Endothelial cell of umbilical vein (primary cell): ENCODE measurements at regions of chr16 and their contacts with region 1.

Region 1: GRCh38 chr16:15502041-15502725 is 67.8 kb downstream of the BMERB1 start:
- DNase-seq: peak; percentile 93
- H3K4me3 ChIP-seq: peak overlapping the region in 1 of 3 experiments; percentile 40
- H3K27ac ChIP-seq: peak overlapping the region; percentile 68
- H3K4me1 ChIP-seq: peaks cover 15% of the 10 kb centered on the region
- H3K27me3 ChIP-seq: no peaks in the 10 kb centered on the region
- CTCF ChIP-seq: no peak
- POLR2A ChIP-seq: no peak

Region 2: DNA sequence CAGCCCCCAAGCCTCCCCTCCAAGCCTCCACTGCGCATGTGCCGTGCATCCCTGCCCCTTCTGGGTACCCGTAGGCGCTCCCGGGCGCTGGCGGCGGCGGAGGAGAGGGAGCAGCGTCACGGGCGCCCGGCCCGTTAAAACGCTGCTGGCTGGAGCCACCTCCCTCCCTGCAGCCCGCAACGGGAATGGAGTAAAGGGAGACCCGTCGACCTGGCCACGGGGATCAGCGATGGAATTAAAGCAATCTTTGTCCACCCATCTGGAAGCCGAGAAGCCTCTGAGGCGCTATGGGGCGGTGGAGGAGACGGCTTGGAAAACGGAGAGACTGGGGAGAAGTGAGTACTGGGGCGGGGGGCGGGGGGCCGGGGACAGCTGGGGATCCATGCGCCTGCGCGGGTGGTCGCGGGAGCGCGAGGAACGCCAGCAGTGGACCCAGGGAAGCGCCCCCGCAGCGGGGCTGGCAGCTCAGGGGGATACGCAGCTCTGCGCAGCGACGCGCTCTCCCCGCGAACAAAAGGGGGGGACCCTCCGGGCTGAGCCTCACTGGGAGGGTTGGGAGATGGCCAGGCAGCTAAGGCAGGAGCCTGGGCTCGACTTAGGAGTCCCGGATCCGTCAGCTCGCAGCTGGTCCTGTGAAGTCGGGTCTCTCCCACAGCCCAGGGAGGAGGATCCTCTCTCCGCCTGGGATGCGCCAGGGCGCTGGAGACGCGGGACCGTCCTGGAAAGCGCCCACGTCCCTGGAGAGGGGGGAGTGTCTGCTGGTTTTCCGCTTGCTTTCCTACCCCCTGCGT is 67.6 kb before region 1 on chr16 and contains the start of gene BMERB1:
- CTCF ChIA-PET with region 1: no interaction called
- POLR2A ChIA-PET with region 1: no interaction called
- dilution Hi-C with region 1: no loop called
- intact Hi-C with region 1: loop called (anchors 2 kb)
- DNase-seq: peak; percentile 73
- H3K4me3 ChIP-seq: peak within 1 kb of the TSS; percentile 67 to 96 (median 72)
- H3K27ac ChIP-seq: no peak within 1 kb of the TSS
- H3K4me1 ChIP-seq: peaks cover 9% of the 10 kb centered on the region
- H3K27me3 ChIP-seq: no peaks in the 10 kb centered on the region
- CTCF ChIP-seq: no peak
- POLR2A ChIP-seq: no peak
- total RNA-seq, gene BMERB1: 14.1 and 27.2 TPM in 2 replicates

Region 3: DNA sequence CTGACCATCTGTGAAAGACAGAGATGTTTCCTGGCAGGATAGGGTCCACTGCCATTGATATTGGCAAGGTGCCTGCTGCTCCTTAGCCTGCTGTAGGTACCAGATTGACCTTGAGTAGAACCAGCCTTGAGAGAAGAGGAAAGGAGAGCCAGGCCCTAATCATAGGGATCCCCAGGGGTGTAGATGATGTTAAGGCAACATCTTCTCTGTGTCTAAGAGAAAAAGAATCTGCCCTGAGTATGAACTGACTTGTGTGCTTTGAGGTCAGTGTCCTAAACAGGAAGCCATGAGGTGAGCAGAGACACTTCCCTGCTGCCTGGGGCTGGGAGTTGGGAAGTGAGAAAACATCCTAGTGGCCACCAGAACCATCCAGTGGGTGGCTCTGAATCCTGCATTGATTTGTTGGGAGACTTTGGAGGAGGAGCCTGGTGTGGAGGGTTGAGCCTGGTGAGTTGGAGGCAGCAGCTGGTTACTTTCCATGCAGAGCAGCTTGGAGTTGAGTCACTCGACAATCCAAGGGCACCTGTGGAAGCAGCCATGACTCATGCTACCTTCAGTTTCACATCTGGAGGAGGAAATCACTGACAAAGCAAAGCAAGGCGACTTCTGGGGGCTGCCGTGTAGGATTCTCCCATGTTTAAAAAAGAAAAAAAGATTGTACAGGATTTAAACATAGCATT is 20.0 kb before region 1 on chr16:
- CTCF ChIA-PET with region 1: interaction called, 5 read pairs
- POLR2A ChIA-PET with region 1: no interaction called
- dilution Hi-C with region 1: no loop called
- intact Hi-C with region 1: loop called (anchors 2 kb)
- DNase-seq: peak; percentile 95
- H3K4me3 ChIP-seq: no peak overlapping the region
- H3K27ac ChIP-seq: peak overlapping the region; percentile 10
- H3K4me1 ChIP-seq: peaks cover 12% of the 10 kb centered on the region
- H3K27me3 ChIP-seq: no peaks in the 10 kb centered on the region
- CTCF ChIP-seq: no peak
- POLR2A ChIP-seq: no peak

Region 4: DNA sequence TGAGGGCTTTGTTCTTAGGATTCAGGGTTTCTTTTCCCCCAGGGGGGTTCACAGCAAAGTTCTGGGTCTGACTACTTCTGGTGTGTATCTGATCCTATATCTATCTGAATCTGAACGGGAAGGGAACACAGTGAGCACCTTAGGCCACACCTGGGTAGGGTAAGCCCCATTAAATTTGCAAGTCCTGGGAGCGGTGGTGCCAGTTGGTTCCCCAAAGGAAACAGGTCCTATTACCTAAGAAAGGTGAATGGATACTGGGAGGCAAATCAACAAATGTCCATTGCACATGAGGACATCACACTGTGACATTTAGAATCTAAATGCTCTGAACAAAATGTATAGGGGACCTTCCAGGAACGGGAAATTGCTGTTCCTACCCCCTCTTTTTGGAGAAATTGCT is 13.2 kb before region 1 on chr16:
- CTCF ChIA-PET with region 1: interaction called, 6 read pairs
- POLR2A ChIA-PET with region 1: interaction called, 8 read pairs
- dilution Hi-C with region 1: no loop called
- intact Hi-C with region 1: loop called (anchors 1 kb)
- DNase-seq: no peak
- H3K4me3 ChIP-seq: no peak overlapping the region
- H3K27ac ChIP-seq: peak overlapping the region; percentile 43
- H3K4me1 ChIP-seq: peaks cover 18% of the 10 kb centered on the region
- H3K27me3 ChIP-seq: no peaks in the 10 kb centered on the region
- CTCF ChIP-seq: no peak
- POLR2A ChIP-seq: no peak

Region 5: DNA sequence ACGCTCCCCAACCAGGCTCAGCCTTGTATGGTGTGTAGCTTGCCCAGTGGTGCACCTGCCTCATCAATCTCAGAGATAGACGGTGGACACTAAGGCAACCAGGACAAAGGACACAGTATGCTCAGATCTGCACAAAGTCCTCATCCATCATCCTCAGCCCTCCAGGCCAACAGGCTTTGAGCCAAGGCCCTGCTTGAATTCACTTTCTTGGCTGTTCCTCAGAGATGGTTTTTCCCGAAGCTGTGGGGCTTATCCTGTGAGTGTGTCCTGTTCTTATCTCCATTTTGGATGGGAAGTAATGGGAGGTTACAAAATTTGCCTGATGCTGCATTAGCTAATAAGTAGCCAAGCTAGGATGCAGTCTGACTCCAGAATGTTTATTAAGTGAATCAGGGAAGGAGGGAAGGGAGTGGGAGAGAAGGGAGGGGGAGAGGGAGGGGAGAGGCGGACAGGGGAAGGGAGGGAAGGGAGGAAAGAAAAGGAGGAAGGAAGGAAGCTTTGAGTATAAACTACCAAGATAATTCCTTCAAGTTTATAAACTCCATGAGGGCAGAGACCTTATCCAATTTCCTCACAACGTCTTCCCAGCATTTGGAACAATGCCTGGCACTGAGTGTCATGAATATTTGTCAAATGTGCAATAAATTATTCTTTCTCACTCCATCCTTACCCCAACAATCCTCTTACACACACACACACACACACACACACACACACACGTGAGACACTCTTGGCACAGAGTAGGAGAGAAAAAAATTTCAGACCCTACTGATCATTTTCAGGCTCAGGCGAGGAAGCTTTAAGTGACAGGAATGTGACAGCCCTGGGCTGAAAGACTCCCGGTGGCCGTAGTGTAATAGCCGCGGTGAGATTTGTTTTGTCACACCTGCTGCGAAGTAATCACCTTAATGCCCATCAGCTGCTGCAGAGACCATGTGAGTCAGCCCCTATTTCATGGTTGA is 16.5 kb after region 1 on chr16:
- CTCF ChIA-PET with region 1: interaction called, 13 read pairs
- POLR2A ChIA-PET with region 1: no interaction called
- dilution Hi-C with region 1: no loop called
- intact Hi-C with region 1: loop called (anchors 2 kb)
- DNase-seq: peak; percentile 85
- H3K4me3 ChIP-seq: no peak overlapping the region
- H3K27ac ChIP-seq: no peak overlapping the region
- H3K4me1 ChIP-seq: peaks cover 25% of the 10 kb centered on the region
- H3K27me3 ChIP-seq: no peaks in the 10 kb centered on the region
- CTCF ChIP-seq: no peak
- POLR2A ChIP-seq: no peak